ENCODE measurements at regions of chr12 and their contacts with region 1.

Region 1: GRCh38 chr12:76094754-76095153 is 10.3 kb upstream of the NAP1L1 start:
- DNase-seq: no peak
- ATAC-seq: no peak

Region 2: DNA sequence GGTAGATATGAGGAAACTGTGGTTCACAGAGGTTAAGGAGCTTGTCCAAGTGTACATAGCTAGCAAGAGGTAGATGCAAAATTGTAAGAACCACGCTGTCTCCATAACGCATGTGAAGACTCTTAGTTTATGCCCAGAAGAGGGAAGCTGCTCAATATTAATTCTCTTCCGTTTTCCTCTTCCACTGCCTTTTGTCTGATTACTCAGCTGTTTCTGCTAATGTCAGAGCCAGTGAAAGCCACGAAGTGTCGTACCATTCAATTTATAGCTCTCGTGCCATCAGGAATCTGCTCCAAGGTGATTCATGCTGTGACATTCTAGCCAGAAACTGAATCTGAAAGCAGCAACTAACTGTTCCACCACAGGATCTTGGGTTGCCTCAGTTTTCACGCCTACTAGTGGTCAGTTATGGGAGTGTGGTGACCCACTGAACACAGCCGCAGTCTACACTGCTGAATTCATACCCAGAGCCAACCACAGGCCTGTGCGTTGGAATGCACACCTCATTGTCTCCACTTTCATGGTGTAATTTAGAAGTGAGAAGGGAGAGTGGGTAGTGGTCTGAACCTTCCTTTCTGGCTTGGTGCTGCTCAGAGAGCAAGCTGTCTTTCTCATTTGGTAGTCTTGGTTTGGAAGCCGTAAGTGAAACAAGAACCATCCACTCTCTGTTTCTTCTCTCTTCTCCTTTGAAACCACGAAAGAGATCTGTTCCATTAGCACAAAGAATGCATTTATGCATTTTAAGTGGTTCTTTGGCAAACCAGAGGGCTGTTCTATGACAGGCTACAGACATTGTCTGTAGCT is 64.0 kb after region 1 on chr12:
- intact Hi-C with region 1: loop called in 1 of 2 experiments (anchors 10 kb)
- DNase-seq: no peak
- ATAC-seq: peak; percentile 83 to 92

Region 3: GRCh38 chr12:76299536-76300296 is 205.0 kb after region 1 on chr12:
- intact Hi-C with region 1: no loop called
- DNase-seq: no peak
- ATAC-seq: no peak

Measured in left cardiac atrium (tissue), 4 donors.